Activated B cell treated with CpG ODN at 0.5 μM for 24 hours (primary cell): ENCODE measurements at regions of chr1 and their contacts with region 1.

Region 1: DNA sequence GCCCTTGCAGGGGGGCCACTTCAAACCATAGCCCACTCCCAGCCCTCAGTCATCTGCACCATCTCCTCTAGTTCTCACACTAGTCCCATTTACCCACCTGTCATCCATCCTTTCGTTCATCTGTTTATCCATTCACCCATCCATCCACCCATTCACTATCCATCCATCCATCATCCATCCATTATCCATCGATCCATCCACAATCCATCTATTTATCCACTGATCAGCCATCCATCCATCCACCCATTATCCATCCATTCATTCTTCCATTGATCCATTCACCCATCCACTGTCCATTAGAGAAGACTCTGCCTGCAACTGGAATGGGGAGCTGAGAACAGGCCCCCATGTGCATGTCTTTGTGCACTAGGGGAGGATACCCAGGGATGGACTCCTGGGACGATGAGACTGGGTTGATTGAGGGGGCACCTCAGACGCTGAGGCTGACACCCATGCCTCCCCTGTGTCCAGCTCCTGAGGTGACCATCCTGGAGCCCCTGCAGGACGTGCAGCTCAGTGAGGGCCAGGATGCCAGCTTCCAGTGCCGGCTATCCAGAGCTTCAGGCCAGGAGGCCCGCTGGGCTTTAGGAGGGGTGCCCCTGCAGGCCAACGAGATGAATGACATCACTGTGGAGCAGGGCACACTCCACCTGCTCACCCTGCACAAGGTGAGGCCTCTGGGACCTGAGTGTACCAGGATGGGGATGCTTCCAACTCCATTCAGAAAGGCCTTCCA is 97.8 kb downstream of the TRIM11 start:
- DNase-seq: no peak
- ATAC-seq: no peak
- H3K4me3 Mint-ChIP-seq: no peak overlapping the region
- H3K27ac Mint-ChIP-seq: no peak overlapping the region
- H3K4me1 Mint-ChIP-seq: no peaks in the 10 kb centered on the region
- H3K27me3 Mint-ChIP-seq: no peaks in the 10 kb centered on the region
- CTCF ChIP-seq: no peak

Region 2: GRCh38 chr1:228291961-228292911 is 16.6 kb before region 1 on chr1:
- CTCF ChIA-PET with region 1: no interaction called
- POLR2A ChIA-PET with region 1: no interaction called
- intact Hi-C with region 1: loop called (anchors 1 kb)
- DNase-seq: no peak
- ATAC-seq: no peak
- H3K4me3 Mint-ChIP-seq: no peak overlapping the region
- H3K27ac Mint-ChIP-seq: no peak overlapping the region
- H3K4me1 Mint-ChIP-seq: no peaks in the 10 kb centered on the region
- H3K27me3 Mint-ChIP-seq: no peaks in the 10 kb centered on the region
- CTCF ChIP-seq: no peak